ENCODE measurements at regions of chr11 and their contacts with region 1.

Region 1: DNA sequence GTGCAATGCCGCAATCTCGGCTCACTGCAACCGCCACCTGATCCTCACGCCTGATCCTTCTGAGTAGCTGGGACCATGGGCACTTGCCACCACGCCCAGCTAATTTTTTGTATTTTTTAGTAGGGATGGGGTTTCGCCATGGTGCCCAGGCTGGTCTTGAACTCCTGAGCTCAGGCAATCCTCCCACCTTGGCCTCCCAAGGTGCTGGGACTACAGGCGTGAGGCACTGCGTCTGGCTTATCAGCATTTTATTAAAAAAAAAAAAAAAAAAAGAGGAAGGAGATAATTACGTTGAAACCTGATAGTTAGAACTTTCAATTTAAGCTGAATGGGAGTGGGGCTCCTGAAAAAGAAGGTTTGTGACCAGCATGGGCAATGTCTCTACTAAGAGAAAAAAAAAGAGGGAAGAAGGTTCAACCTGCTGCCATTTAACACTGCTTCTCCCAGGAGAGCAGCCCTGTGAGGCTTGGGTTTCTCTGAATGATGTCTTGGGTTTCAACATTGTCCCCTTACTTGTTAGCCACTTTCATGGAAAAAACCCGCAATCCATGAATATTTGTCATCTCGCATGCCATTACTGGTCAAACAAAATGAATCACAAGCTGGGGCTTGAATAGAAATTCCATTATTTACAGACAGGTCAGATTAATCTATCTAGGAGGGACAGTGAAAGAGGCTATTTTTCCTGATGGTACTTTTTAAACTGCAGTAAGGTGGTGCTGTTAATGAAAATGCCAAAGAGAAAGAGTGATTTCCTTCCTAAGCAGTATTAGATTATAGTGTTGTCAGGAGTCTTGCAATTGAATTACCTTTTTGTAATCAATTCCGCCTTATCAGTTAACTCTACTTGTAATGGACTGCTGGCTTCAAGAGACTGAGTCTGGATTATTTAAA is 72.5 kb downstream of the PACS1 start:
- DNase-seq: peak; percentile 68 to 97
- H3K4me3 ChIP-seq: no peak overlapping the region
- H3K27ac ChIP-seq: peak overlapping the region; percentile 75
- H3K4me1 ChIP-seq: peaks cover 27% of the 10 kb centered on the region
- H3K27me3 ChIP-seq: no peaks in the 10 kb centered on the region
- CTCF ChIP-seq: no peak

Region 2: DNA sequence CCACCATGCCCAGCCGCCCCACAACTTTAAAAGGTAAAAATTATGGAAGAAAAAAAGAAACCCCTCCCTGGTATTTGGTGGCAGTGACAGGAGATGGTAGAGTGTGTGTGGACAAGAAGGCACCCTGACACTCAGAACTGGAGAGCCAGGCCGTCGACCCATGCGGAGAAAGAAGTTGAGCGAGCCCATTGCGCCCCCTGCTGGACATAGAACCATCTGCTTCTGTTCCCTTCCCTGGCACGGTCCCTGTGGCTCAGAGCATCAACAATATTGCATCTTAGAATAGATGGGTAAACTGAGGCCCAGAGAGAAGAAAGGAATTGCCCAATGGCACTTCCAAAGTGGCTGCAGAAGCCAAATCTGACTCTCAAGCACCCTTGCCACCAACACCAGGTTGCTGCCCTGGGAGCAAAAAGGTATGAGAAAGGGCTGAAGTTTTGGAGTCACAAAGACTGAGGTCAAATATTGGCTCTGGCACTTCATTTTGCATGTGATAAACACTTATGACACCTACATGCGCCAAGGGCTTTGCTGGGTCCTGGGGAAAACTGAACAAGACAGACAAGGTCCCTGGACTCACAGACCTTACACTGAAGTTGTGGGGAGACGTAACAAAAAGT is 287.5 kb after region 1 on chr11:
- CTCF ChIA-PET with region 1: interaction called, 10 read pairs
- POLR2A ChIA-PET with region 1: no interaction called
- intact Hi-C with region 1: no loop called
- DNase-seq: peak in 1 of 2 experiments; percentile 53
- H3K4me3 ChIP-seq: no peak overlapping the region
- H3K27ac ChIP-seq: no peak overlapping the region
- H3K4me1 ChIP-seq: no peaks in the 10 kb centered on the region
- H3K27me3 ChIP-seq: peaks cover 3% of the 10 kb centered on the region; the same call in 1 of the 2 replicates
- CTCF ChIP-seq: peak; percentile 95

Region 3: DNA sequence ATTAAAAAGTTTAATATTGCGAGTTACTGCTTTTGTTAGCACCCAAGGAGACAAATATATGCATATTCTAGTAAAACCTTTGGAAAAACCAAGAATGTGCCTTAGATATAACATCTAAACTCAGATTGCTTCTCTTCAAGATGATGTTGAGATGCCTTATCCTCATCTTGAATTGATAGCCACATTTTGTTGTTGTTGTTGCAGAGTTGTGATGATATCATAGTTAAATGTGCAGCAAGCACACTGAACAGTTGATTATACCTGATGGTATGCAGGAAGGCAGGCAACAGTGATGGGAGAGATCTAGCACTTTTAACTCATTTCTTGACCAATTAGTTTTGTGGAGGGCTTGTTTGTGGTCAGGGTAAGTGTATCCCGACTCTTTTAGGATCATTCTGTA is 1024.5 kb after region 1 on chr11:
- CTCF ChIA-PET with region 1: no interaction called
- POLR2A ChIA-PET with region 1: no interaction called
- intact Hi-C with region 1: no loop called
- DNase-seq: no peak
- H3K4me3 ChIP-seq: no peak overlapping the region
- H3K27ac ChIP-seq: peak overlapping the region; percentile 73
- H3K4me1 ChIP-seq: peaks cover 35% of the 10 kb centered on the region
- H3K27me3 ChIP-seq: no peaks in the 10 kb centered on the region
- CTCF ChIP-seq: no peak

Measured in PC-9 (cell line).